ENCODE measurements at regions of chr9 and their contacts with region 1.

Region 1: GRCh38 chr9:89310475-89311346 is at the start of gene CKS2:
- DNase-seq: peak; percentile 100
- ATAC-seq: peak; percentile 88 to 96 (median 88)
- H3K4me3 ChIP-seq: peak within 1 kb of the TSS; percentile 60
- H3K4me3 Mint-ChIP-seq: peak within 1 kb of the TSS; percentile 96
- H3K27ac ChIP-seq: peak within 1 kb of the TSS; percentile 95
- H3K27ac Mint-ChIP-seq: peak within 1 kb of the TSS; percentile 97 to 99
- H3K4me1 ChIP-seq: peaks cover 18% of the 10 kb centered on the region
- H3K4me1 Mint-ChIP-seq: peaks cover 16 to 23% of the 10 kb centered on the region in 2 donors
- H3K27me3 ChIP-seq: no peaks in the 10 kb centered on the region
- H3K27me3 Mint-ChIP-seq: no peaks in the 10 kb centered on the region
- CTCF ChIP-seq: no peak
- total RNA-seq, gene CKS2: 11.4 to 18.3 (median 16.4) TPM

Region 2: DNA sequence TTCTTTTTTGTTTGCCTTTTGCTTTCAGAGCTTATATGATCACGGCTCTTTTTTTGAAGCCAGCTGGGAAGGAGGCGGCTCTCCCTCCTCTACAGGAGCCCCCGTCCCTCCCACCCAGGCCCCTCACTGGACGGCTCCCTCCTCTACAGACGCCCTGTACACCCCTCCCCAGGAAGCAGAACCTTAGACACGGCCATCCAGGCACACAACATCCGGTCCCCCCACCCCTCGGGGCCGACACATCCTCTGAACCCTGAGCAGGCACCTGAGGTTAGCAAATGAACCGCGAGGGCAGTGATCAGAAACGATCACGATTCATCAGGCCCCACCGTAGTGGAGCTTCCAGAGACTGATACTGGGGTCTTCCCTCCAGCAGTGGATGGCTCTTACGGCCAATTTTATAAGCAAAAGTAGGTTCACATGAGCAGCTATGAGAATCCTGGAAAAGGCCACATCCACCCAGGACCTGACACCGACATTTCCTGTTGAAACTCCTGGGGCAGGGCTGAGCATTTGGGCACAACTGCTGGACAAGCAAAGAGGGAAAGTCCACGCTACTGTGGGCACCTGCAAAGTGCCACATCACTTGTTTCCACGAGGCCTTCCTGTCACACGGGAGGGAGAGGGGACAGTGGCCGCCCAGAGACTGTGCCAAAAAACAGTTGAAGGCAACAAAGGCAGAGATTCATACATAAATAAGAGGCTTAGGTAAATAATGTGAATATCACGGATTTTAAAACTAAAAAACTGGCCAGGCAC is 108.3 kb after region 1 on chr9:
- intact Hi-C with region 1: loop called (anchors 5 kb)
- DNase-seq: peak; percentile 58 to 83
- ATAC-seq: peak; percentile 68 to 90 (median 79)
- H3K4me3 ChIP-seq: no peak overlapping the region
- H3K4me3 Mint-ChIP-seq: peak overlapping the region; percentile 87
- H3K27ac ChIP-seq: peak overlapping the region; percentile 75
- H3K27ac Mint-ChIP-seq: peak overlapping the region; percentile 84 to 92
- H3K4me1 ChIP-seq: peaks cover 75% of the 10 kb centered on the region
- H3K4me1 Mint-ChIP-seq: peaks cover 74% of the 10 kb centered on the region in 2 donors
- H3K27me3 ChIP-seq: no peaks in the 10 kb centered on the region
- H3K27me3 Mint-ChIP-seq: no peaks in the 10 kb centered on the region
- CTCF ChIP-seq: no peak

Region 3: DNA sequence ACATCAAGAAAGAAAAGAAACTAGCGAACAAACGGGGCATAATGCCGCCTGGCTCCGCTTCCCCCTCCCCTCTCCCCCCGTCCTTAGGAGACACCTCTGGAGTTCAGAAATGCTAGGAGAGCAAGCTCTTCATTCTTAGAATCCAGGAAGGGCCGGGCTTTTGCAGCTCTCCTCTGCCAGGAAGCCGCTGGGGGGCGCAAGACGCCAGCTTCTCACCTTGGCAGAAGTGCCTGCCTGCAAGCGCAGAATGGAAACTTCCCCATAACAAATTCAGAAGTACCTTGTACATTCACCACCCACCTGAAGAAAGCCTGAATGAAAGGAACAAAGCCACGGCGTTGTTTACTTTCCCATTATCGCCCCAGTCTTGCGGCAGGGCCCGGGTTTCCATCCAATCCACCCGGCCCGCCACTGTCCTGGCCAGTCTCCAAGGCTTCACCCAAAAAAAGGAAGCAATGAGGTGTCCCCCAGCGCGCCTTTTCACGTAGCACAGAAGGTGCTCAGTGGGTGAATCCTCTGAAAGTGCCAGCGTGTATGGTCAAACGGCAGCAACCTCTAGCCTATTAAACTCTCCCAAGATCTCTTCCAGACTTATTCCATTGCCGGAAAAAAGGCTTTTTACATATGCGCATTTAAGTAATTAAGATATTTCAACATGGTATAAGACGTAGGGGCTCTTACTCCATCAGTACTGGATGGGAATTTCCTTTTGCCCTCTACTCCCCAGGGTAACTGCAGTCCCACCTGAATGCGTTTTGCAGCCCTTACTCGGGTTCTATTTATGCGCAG is 292.5 kb after region 1 on chr9:
- intact Hi-C with region 1: no loop called
- DNase-seq: peak; percentile 73 to 92
- ATAC-seq: peak in 1 of 3 donors; percentile 26
- H3K4me3 ChIP-seq: peak overlapping the region; percentile 9
- H3K4me3 Mint-ChIP-seq: peak overlapping the region; percentile 67
- H3K27ac ChIP-seq: no peak overlapping the region
- H3K27ac Mint-ChIP-seq: peak overlapping the region in 1 of 2 donors; percentile 18
- H3K4me1 ChIP-seq: peaks cover 42% of the 10 kb centered on the region
- H3K4me1 Mint-ChIP-seq: peaks cover 6 to 32% of the 10 kb centered on the region in 2 donors
- H3K27me3 ChIP-seq: peaks cover 16% of the 10 kb centered on the region
- H3K27me3 Mint-ChIP-seq: peaks cover 24 to 36% of the 10 kb centered on the region in 2 donors
- CTCF ChIP-seq: peak; percentile 65